ENCODE measurements at regions of chr7 and their contacts with region 1.

Region 1: DNA sequence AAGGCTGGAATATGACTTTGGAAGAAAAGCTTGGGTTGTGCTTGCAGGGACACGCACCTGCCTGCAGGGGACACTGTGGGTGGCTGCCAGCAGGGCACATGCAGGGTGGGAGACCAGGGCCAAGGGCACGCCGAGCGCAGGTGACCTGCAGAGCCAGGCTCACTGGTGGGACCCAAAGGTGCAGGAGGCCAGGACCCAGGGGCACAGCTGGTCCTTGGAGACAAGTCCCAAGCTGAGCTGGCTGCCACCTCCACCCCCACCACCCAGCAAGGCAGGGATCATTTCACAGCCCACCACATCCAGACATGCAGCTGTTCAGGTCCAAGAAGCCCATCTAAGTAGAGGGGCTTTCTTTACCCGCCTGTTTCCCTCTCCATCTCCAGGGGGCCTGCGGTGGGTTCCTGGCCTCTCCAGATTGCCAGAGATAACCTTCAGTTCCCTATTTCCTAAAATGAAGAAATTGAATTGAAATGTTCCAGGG is 13.8 kb upstream of the CLIP2 start:
- DNase-seq: no peak
- ATAC-seq: peak; percentile 10
- H3K4me3 ChIP-seq: no peak overlapping the region
- H3K27ac ChIP-seq: peak overlapping the region; percentile 72
- H3K4me1 ChIP-seq: peaks cover 56% of the 10 kb centered on the region
- H3K27me3 ChIP-seq: no peaks in the 10 kb centered on the region
- CTCF ChIP-seq: peak; percentile 95

Region 2: GRCh38 chr7:73628504-73628903 is 646.9 kb before region 1 on chr7:
- CTCF ChIA-PET with region 1: interaction called, 19 read pairs
- POLR2A ChIA-PET with region 1: no interaction called
- in situ Hi-C with region 1: no loop called
- intact Hi-C with region 1: no loop called
- DNase-seq: no peak
- ATAC-seq: no peak
- H3K4me3 ChIP-seq: no peak overlapping the region
- H3K27ac ChIP-seq: no peak overlapping the region
- H3K4me1 ChIP-seq: no peaks in the 10 kb centered on the region
- H3K27me3 ChIP-seq: no peaks in the 10 kb centered on the region
- CTCF ChIP-seq: no peak

Region 3: GRCh38 chr7:74164985-74165456 is 110.4 kb before region 1 on chr7:
- CTCF ChIA-PET with region 1: no interaction called
- POLR2A ChIA-PET with region 1: no interaction called
- in situ Hi-C with region 1: no loop called
- intact Hi-C with region 1: no loop called
- DNase-seq: no peak
- ATAC-seq: no peak
- H3K4me3 ChIP-seq: no peak overlapping the region
- H3K27ac ChIP-seq: no peak overlapping the region
- H3K4me1 ChIP-seq: no peaks in the 10 kb centered on the region
- H3K27me3 ChIP-seq: no peaks in the 10 kb centered on the region
- CTCF ChIP-seq: no peak; the same call in 1 of the 2 replicates

Region 4: DNA sequence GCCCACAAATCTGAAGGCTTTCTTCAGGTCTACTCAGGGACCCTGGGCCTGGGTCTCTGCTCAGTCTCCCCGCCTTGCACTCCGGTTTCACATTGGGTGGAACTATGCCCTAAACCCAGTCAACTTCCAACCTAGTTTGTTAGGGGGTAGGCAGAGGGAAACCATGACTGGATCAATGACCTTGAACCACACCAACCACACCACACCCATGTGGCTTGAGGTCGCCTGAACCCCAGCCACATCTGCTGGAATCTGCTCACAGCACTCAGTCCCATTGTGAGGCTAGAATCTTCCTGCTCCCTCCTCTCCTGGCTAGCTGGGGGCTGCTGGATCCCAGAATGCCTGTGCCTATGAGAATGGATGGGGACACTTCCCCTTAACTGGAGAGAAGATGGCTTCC is 39.2 kb before region 1 on chr7:
- CTCF ChIA-PET with region 1: no interaction called
- POLR2A ChIA-PET with region 1: interaction called, 10 read pairs
- in situ Hi-C with region 1: no loop called
- intact Hi-C with region 1: no loop called
- DNase-seq: no peak
- ATAC-seq: no peak
- H3K4me3 ChIP-seq: no peak overlapping the region
- H3K27ac ChIP-seq: no peak overlapping the region
- H3K4me1 ChIP-seq: no peaks in the 10 kb centered on the region
- H3K27me3 ChIP-seq: no peaks in the 10 kb centered on the region
- CTCF ChIP-seq: no peak

Region 5: DNA sequence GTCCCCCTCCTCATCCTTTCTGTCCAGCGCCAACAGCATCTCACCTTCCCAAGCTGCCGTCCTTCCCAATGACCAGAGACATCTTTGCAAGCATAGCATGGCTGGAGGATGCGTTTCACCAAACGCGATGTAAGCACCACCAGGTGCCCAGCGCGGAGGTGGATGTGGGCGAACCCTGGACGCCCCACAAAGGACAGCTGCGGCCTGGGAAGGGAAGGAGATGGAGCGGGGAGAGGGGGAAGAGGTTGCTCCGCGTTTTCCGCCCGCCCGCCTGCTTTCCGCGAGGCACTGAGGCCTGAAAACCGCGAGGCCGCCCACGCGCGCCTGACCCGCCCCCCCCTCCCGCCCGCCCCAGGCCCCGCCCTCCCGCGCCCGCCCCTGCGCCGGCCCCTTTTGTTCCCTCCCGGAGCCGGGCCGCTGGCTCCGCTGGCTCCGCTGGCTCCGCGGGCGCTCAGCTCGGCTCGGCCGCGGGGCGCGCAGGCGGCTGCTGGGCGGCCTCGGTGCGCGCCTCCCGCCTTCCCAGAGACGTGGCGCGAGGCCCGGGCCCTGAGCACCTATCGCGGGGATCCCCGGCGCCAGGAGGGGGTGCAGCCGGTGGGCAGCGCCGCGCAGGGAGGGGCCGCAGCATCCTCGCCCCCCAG is 13.7 kb after region 1 on chr7 and contains the start of gene CLIP2:
- CTCF ChIA-PET with region 1: interaction called, 13 read pairs
- POLR2A ChIA-PET with region 1: interaction called, 4 read pairs
- in situ Hi-C with region 1: no loop called
- intact Hi-C with region 1: no loop called
- DNase-seq: no peak
- ATAC-seq: peak; percentile 87
- H3K4me3 ChIP-seq: peak within 1 kb of the TSS; percentile 74 to 84
- H3K27ac ChIP-seq: peak within 1 kb of the TSS; percentile 89
- H3K4me1 ChIP-seq: peaks cover 56% of the 10 kb centered on the region
- H3K27me3 ChIP-seq: no peaks in the 10 kb centered on the region
- CTCF ChIP-seq: no peak
- total RNA-seq, gene CLIP2: 39.9 TPM

Region 6: DNA sequence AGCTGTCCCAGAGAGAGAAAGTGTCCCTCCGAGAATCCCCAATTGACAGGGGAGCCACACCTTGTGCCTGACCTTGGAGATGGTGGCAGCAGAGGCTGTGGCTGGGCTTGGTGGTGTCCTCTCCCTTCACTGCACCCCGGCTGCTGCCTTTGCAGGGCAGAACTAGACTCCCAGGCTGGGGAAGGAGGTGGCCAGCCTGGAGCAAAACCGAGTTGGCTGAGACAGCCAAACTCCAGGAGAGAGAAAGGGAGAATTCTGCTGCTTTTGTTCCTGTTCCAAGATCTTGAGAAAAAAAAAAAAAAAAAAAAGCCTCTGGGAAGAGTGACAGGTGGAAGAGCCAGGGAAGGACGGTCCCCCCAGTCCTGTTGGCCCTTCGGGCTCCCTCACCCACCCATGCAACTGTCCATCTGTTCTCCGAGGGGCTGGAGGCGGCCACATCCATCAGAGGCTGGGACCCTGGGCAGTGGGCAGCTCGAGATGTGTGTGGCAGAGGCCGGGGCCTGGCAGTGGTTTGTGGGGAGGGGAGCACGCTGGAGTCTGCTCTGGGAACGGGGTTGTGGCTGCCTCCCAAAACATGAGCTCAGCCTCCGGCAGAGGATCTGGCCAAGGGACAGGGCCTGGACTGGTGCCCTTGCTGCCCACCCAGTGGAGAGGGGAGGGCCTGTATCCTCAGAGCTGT is 49.2 kb after region 1 on chr7:
- CTCF ChIA-PET with region 1: interaction called, 13 read pairs
- POLR2A ChIA-PET with region 1: no interaction called
- in situ Hi-C with region 1: no loop called
- intact Hi-C with region 1: no loop called
- DNase-seq: no peak
- ATAC-seq: no peak
- H3K4me3 ChIP-seq: no peak overlapping the region
- H3K27ac ChIP-seq: no peak overlapping the region
- H3K4me1 ChIP-seq: no peaks in the 10 kb centered on the region
- H3K27me3 ChIP-seq: no peaks in the 10 kb centered on the region
- CTCF ChIP-seq: no peak

Region 7: GRCh38 chr7:74401137-74401859 is 125.9 kb after region 1 on chr7:
- CTCF ChIA-PET with region 1: no interaction called
- POLR2A ChIA-PET with region 1: no interaction called
- in situ Hi-C with region 1: no loop called
- intact Hi-C with region 1: loop called (anchors 5 kb)
- DNase-seq: peak; percentile 75
- ATAC-seq: peak; percentile 84
- H3K4me3 ChIP-seq: no peak overlapping the region
- H3K27ac ChIP-seq: no peak overlapping the region
- H3K4me1 ChIP-seq: no peaks in the 10 kb centered on the region
- H3K27me3 ChIP-seq: no peaks in the 10 kb centered on the region
- CTCF ChIP-seq: peak; percentile 97

Measured in Panc1 (cell line).